HCT116 (cell line): ENCODE measurements at regions of chr1 and their contacts with region 1.

Region 1: DNA sequence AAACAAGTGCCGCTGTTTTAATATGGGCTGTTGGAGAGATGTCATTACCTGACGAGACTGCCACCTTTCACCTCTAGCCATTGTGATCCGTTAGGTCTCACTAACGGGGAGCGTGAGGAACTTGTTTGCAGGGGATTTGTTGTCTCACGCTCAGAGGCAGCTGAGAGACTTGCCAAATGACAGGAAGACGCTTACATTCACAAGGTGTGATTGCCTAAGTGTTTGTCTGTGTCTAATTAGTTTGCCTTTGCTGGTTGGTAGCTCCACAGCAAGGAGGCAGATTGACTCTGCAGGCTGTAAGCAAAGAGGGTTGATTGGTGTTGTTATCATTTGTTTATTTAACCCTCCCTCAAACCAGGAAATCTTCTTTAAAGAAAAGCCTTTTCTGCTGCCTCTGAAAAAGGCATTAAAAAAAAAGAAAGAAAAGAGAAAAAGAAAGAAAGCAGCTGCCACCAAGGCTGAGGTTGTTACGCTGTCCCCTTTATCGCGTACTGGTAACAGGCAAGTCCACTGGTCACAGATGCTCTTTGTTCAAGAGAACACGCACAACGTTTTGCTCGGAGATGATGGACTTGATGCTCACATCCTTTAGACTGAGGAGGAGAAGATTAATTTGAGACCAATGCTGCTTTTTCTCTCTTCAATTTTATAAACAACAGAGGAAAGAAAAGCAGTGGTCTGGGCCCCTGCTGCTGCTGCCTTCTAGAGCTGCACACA is 203.9 kb downstream of the ZNF326 start:
- DNase-seq: no peak
- ATAC-seq: no peak
- H3K4me3 ChIP-seq: no peak overlapping the region
- H3K27ac ChIP-seq: no peak overlapping the region
- H3K4me1 ChIP-seq: no peaks in the 10 kb centered on the region
- H3K27me3 ChIP-seq: peaks cover 35% of the 10 kb centered on the region
- CTCF ChIP-seq: no peak
- POLR2A ChIP-seq: no peak
- RAD21 ChIP-seq: no peak

Region 2: GRCh38 chr1:90175490-90176170 is 23.1 kb before region 1 on chr1:
- CTCF ChIA-PET with region 1: no interaction called
- POLR2A ChIA-PET with region 1: no interaction called
- RAD21 ChIA-PET with region 1: no interaction called
- intact Hi-C with region 1: loop called (anchors 2 kb)
- DNase-seq: no peak
- ATAC-seq: no peak
- H3K4me3 ChIP-seq: no peak overlapping the region
- H3K27ac ChIP-seq: no peak overlapping the region
- H3K4me1 ChIP-seq: no peaks in the 10 kb centered on the region
- H3K27me3 ChIP-seq: peaks cover 26% of the 10 kb centered on the region; the same call in 1 of the 2 replicates
- CTCF ChIP-seq: no peak
- POLR2A ChIP-seq: no peak
- RAD21 ChIP-seq: no peak